ENCODE measurements at regions of chr17 and their contacts with region 1.

Region 1: GRCh38 chr17:46876353-46876887 is 25.0 kb downstream of the WNT9B start:
- DNase-seq: peak; percentile 53
- ATAC-seq: peak; percentile 93
- H3K4me3 ChIP-seq: no peak overlapping the region
- H3K27ac ChIP-seq: no peak overlapping the region
- H3K4me1 ChIP-seq: peaks cover 36% of the 10 kb centered on the region
- H3K27me3 ChIP-seq: peaks cover 7 to 53% of the 10 kb centered on the region in 2 experiments
- CTCF ChIP-seq: peak; percentile 95
- EP300 ChIP-seq: no peak
- POLR2A ChIP-seq: no peak
- RAD21 ChIP-seq: peak; percentile 92

Region 2: DNA sequence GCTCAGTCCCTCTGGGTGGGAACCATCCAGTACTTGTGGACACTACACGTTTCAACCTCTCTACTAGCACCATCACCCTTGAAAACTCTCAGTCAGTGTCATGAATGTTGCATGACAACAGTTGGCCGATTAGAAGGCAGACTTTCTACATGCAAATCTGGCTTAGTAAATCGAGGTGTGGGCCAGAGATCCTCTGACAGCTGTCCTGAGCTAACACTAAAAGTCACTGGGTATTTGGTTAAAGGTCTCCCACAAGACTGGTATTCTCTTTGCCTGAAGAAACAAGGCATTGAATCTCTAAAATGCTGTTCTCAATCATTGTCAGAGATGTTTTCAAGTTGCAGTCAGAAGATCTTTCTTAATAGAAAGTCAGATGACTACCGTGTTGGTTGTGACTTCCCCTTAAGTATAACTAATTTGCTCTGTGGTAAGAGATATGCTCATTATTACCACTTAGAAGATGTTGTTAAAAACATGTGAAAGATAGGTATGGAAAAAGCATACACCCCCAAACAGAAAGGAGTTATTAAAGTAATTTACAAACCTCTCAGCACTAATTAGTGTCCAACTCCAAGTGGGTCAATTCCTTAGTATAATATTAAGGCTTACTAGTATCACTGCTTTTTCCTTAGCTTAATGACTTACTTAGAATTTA is 120.2 kb before region 1 on chr17:
- CTCF ChIA-PET with region 1: no interaction called
- POLR2A ChIA-PET with region 1: no interaction called
- in situ Hi-C with region 1: no loop called
- intact Hi-C with region 1: no loop called
- DNase-seq: no peak
- ATAC-seq: no peak
- H3K4me3 ChIP-seq: no peak overlapping the region
- H3K27ac ChIP-seq: no peak overlapping the region
- H3K4me1 ChIP-seq: peaks cover 17% of the 10 kb centered on the region
- H3K27me3 ChIP-seq: no peaks in the 10 kb centered on the region
- CTCF ChIP-seq: no peak
- EP300 ChIP-seq: no peak
- POLR2A ChIP-seq: no peak
- RAD21 ChIP-seq: no peak

Region 3: DNA sequence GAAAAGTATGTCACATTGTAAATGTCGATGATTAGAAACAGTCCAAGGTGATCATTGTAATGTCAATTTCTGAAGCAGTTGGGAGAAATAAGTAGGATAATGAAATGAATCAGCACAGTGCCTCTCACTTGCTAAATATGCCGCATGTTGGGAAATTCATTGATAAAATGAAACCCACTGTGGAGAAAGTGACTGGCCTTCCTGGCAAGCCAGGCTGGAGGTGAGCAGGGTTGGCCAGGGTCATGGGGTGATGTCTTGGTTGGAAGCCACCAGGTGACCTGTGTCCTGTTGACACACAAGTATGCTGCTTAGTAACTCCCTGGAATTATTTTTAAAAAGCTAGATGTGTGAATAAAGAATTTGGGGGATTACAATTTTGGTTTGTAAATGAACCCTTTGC is 39.9 kb before region 1 on chr17:
- CTCF ChIA-PET with region 1: interaction called, 15 read pairs
- POLR2A ChIA-PET with region 1: interaction called, 3 read pairs
- in situ Hi-C with region 1: loop called (anchors 5 kb)
- intact Hi-C with region 1: loop called (anchors 5 kb)
- DNase-seq: no peak
- ATAC-seq: no peak
- H3K4me3 ChIP-seq: no peak overlapping the region
- H3K27ac ChIP-seq: no peak overlapping the region
- H3K4me1 ChIP-seq: peaks cover 30% of the 10 kb centered on the region
- H3K27me3 ChIP-seq: peaks cover 9 to 41% of the 10 kb centered on the region in 2 experiments
- CTCF ChIP-seq: no peak
- EP300 ChIP-seq: no peak
- POLR2A ChIP-seq: no peak
- RAD21 ChIP-seq: no peak

Region 4: GRCh38 chr17:46841561-46842379 is 34.6 kb before region 1 on chr17:
- CTCF ChIA-PET with region 1: interaction called, 15 read pairs
- POLR2A ChIA-PET with region 1: no interaction called
- in situ Hi-C with region 1: loop called (anchors 5 kb)
- intact Hi-C with region 1: loop called (anchors 5 kb)
- DNase-seq: no peak
- ATAC-seq: peak; percentile 92
- H3K4me3 ChIP-seq: peak overlapping the region in 2 of 3 experiments; percentile 12 to 68; a peak in 2 of 6 replicates
- H3K27ac ChIP-seq: no peak overlapping the region
- H3K4me1 ChIP-seq: peaks cover 22% of the 10 kb centered on the region
- H3K27me3 ChIP-seq: peaks cover 0 to 10% of the 10 kb centered on the region in 2 experiments; a peak in 3 of 5 replicates
- CTCF ChIP-seq: peak; percentile 95
- EP300 ChIP-seq: no peak
- POLR2A ChIP-seq: no peak
- RAD21 ChIP-seq: peak; percentile 97

Region 5: DNA sequence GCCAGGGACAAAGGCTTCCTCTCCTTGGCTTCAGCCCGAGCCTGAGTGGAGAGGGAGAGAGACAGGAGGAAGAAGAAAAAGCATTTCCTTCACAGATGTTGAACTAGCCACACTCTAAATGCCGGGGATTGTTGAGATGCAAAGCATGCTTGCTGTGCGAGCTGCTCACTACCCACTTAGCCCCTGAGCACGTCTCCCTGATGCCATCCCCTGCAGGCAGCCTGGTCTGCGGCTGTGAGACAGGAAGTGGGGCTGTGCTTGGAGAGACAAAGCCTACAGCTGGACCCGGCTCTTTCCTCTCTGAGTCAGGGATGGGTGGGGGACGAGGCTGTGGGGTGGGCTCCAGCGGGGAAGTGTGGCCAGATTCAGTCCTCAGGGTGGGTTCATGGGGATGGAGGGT is 11.3 kb before region 1 on chr17:
- CTCF ChIA-PET with region 1: no interaction called
- POLR2A ChIA-PET with region 1: no interaction called
- in situ Hi-C with region 1: no loop called
- intact Hi-C with region 1: no loop called
- DNase-seq: no peak
- ATAC-seq: no peak
- H3K4me3 ChIP-seq: no peak overlapping the region
- H3K27ac ChIP-seq: no peak overlapping the region
- H3K4me1 ChIP-seq: peaks cover 55% of the 10 kb centered on the region
- H3K27me3 ChIP-seq: peaks cover 10 to 29% of the 10 kb centered on the region in 2 experiments; a peak in 3 of 5 replicates
- CTCF ChIP-seq: no peak
- EP300 ChIP-seq: no peak
- POLR2A ChIP-seq: no peak
- RAD21 ChIP-seq: no peak

Region 6: DNA sequence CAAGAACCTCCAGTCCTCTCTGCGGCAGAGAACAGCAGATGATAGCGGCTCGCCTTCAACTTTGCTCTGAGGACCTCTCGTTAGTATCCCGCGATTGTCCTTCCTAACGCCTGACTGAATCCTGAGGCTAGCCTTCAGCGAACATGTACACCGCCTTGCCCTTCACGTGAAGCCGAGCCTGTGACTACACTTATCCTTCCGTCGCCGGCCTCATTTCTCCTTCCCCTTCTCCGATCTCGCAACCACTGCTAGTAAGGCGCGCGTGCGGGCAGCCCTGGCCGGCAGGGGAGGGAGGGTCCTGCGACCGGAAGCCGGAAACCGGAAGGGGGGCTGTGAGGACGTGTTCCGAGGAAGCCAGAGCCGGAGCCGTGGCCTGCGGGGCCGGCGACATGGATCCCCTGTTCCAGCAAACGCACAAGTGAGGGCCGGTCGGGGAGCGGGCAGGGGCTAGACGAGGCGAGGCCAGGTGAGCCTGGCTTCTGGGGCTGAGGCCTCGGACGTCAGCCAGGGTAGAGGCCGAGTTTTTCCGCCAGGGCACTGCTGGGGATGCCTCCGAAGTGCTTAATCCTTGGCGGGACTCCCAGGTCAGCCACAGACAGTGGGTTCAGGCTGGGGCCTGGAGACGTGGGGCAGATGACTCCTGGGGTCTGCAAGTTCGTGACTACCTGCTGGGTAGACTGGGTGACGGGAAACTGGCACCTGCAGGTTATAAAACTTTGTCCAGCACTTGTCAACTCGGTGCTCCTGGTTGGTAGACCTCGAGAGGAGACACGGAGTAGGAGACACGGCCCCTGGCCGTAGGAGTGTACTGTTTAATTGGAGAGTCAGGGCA is 46.6 kb after region 1 on chr17 and contains the start of gene GOSR2:
- CTCF ChIA-PET with region 1: no interaction called
- POLR2A ChIA-PET with region 1: no interaction called
- in situ Hi-C with region 1: no loop called
- intact Hi-C with region 1: loop called (anchors 2 kb)
- DNase-seq: peak; percentile 89
- ATAC-seq: peak; percentile 98
- H3K4me3 ChIP-seq: peak within 1 kb of the TSS; percentile 87 to 97 (median 92)
- H3K27ac ChIP-seq: peak within 1 kb of the TSS; percentile 88
- H3K4me1 ChIP-seq: peaks cover 41% of the 10 kb centered on the region
- H3K27me3 ChIP-seq: no peaks in the 10 kb centered on the region; a peak in 1 of 5 replicates
- CTCF ChIP-seq: no peak; the same call in 1 of the 2 replicates
- EP300 ChIP-seq: peak; percentile 35 to 44; a peak in 1 of 4 replicates
- POLR2A ChIP-seq: peak; percentile 93 to 98
- RAD21 ChIP-seq: peak; percentile 57
- total RNA-seq, gene GOSR2: 63.9 and 69.8 TPM in 2 replicates

Region 7: GRCh38 chr17:46935658-46936266 is 59.3 kb after region 1 on chr17:
- CTCF ChIA-PET with region 1: no interaction called
- POLR2A ChIA-PET with region 1: no interaction called
- in situ Hi-C with region 1: loop called (anchors 10 kb)
- intact Hi-C with region 1: loop called (anchors 2 kb)
- DNase-seq: no peak
- ATAC-seq: no peak
- H3K4me3 ChIP-seq: no peak overlapping the region
- H3K27ac ChIP-seq: no peak overlapping the region
- H3K4me1 ChIP-seq: peaks cover 4% of the 10 kb centered on the region; the same call in 1 of the 2 replicates
- H3K27me3 ChIP-seq: no peaks in the 10 kb centered on the region
- CTCF ChIP-seq: no peak
- EP300 ChIP-seq: no peak
- POLR2A ChIP-seq: no peak
- RAD21 ChIP-seq: no peak

Measured in HepG2 (cell line).